ENCODE measurements at regions of chr4 and their contacts with region 1.

Region 1: DNA sequence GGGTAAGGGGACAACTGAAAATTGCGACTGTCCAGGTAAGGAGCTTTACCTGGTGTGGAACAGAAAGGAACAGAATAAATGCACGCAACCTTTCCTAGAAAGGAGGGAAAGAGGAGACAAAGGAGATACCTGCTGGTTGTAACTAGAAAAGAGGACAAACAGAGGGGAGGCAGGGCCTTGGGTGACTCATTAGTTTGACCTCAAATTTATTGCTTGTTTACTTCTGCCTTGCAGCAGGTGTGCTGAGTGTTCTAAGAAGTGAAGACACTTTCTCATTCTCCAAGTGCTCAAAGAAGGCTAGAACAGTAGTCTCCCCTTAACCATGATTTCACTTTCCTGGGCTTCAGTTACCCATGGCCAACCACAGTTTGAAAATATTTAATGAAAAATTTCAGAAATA is 123.1 kb upstream of the BOD1L1 start:
- DNase-seq: no peak
- ATAC-seq: no peak
- H3K4me3 ChIP-seq: no peak overlapping the region
- H3K27ac ChIP-seq: no peak overlapping the region
- H3K4me1 ChIP-seq: no peaks in the 10 kb centered on the region
- H3K27me3 ChIP-seq: no peaks in the 10 kb centered on the region
- CTCF ChIP-seq: no peak
- EP300 ChIP-seq: no peak
- POLR2A ChIP-seq: no peak
- RAD21 ChIP-seq: no peak

Region 2: GRCh38 chr4:12472087-12472486 is 1278.5 kb before region 1 on chr4:
- CTCF ChIA-PET with region 1: no interaction called
- POLR2A ChIA-PET with region 1: no interaction called
- RAD21 ChIA-PET with region 1: no interaction called
- SMC1A ChIA-PET with region 1: no interaction called
- in situ Hi-C with region 1: no loop called
- intact Hi-C with region 1: no loop called
- DNase-seq: no peak
- ATAC-seq: no peak
- H3K4me3 ChIP-seq: no peak overlapping the region
- H3K27ac ChIP-seq: no peak overlapping the region
- H3K4me1 ChIP-seq: no peaks in the 10 kb centered on the region
- H3K27me3 ChIP-seq: no peaks in the 10 kb centered on the region
- CTCF ChIP-seq: no peak
- EP300 ChIP-seq: no peak
- POLR2A ChIP-seq: no peak
- RAD21 ChIP-seq: no peak

Region 3: DNA sequence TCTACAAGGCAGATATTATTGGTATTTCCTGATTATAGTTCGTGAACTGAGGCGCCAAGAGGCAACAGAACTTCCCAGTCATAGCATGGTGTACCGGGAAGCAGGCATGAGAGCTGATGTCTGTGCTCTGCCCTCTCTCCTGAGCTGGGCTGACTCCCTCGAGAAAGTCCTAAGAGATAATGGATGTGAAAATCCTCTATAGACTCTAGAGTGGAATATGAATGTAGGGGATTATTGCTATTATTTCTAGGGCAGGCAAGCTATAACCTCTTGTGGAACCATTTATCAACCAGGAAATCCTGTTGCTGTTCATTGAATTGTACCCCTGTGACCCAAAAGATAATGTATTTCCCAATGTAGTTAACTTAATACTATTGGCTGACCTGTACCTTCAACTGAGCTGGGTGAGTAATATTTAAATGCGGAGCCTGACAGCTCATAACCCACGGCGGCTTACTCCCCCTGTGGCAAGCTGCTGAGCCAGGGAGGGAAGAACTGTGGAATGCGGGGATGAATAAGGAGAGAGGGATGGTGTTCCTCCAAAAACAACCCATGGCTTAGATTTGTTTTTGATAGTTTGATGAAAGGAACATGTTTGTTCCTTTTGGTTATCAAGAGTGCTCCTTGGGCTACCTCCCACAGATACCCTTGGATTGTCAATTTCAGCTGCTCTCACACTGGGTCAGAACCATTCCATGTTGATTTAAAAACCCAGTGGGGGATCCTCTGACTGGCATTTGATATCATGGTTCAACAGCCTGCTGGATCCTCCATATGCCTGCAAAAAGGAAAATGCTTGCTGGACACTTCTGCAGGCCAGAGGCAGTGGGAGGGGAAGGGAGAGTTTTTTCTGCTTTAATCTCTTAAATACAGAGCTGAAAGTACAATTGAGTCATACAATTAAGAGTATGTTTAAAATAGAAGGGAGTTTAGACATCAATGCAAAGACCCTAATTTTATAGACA is 215.9 kb after region 1 on chr4:
- CTCF ChIA-PET with region 1: no interaction called
- POLR2A ChIA-PET with region 1: no interaction called
- RAD21 ChIA-PET with region 1: no interaction called
- SMC1A ChIA-PET with region 1: no interaction called
- in situ Hi-C with region 1: no loop called
- intact Hi-C with region 1: loop called (anchors 10 kb)
- DNase-seq: no peak
- ATAC-seq: no peak
- H3K4me3 ChIP-seq: no peak overlapping the region
- H3K27ac ChIP-seq: no peak overlapping the region
- H3K4me1 ChIP-seq: no peaks in the 10 kb centered on the region
- H3K27me3 ChIP-seq: no peaks in the 10 kb centered on the region
- CTCF ChIP-seq: no peak
- EP300 ChIP-seq: no peak
- POLR2A ChIP-seq: no peak
- RAD21 ChIP-seq: no peak